ENCODE measurements at regions of chr12 and their contacts with region 1.

Region 1: DNA sequence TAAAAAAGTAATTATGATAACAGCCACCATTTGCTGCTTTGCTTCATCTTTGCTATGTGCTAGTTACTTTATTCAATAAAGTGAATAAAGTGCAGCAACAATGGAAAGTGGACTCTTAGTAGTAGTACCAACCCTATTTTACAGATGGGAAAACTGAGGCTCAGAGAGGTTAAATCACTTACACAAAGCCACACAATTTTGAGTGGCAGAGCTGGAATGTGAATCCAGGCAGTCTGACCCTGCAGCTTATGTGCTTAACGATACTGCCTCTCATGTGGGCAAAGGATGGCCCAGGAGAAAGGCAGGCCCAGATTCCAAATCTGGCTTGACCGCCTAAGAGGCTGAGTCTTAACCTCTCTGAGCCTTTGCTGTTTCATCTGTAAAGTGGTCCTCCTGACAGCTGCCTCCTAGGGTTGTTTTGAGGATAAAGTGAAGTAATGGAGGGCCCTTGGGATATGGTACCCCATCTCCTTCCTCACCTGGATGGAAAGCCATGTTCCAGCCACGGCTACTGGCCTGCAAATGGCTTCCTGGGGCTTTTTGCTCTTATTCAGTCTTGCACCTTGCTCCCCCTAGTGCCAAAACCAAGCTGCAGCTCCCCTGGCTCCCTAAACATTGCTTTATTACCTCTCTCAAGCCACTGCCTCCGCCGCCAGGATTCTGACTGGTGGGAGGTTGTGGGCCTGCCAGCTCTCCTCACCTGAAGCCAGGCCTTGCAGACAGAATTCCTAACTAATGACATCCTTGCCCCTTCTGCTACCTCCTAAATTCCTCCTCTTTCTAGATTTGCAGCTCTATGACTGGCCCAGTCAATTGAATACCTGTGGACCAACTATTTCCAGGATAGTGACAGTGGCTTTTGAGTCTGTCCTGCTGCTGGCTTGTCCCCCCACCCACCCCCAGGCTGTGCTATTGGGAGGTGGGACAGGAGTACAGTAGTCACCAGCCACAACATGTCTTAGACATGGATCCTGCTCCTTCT is 283.3 kb upstream of the PWP1 start:
- DNase-seq: peak; percentile 89
- H3K4me3 Mint-ChIP-seq: no peak overlapping the region
- H3K27ac Mint-ChIP-seq: no peak overlapping the region
- H3K4me1 Mint-ChIP-seq: peaks cover 30% of the 10 kb centered on the region
- H3K27me3 Mint-ChIP-seq: no peaks in the 10 kb centered on the region

Region 2: GRCh38 chr12:107131832-107132616 is 270.3 kb before region 1 on chr12:
- intact Hi-C with region 1: loop called (anchors 1 kb)
- DNase-seq: peak; percentile 76
- H3K4me3 Mint-ChIP-seq: no peak overlapping the region
- H3K27ac Mint-ChIP-seq: no peak overlapping the region
- H3K4me1 Mint-ChIP-seq: no peaks in the 10 kb centered on the region
- H3K27me3 Mint-ChIP-seq: peaks cover under 1% of the 10 kb centered on the region

Region 3: DNA sequence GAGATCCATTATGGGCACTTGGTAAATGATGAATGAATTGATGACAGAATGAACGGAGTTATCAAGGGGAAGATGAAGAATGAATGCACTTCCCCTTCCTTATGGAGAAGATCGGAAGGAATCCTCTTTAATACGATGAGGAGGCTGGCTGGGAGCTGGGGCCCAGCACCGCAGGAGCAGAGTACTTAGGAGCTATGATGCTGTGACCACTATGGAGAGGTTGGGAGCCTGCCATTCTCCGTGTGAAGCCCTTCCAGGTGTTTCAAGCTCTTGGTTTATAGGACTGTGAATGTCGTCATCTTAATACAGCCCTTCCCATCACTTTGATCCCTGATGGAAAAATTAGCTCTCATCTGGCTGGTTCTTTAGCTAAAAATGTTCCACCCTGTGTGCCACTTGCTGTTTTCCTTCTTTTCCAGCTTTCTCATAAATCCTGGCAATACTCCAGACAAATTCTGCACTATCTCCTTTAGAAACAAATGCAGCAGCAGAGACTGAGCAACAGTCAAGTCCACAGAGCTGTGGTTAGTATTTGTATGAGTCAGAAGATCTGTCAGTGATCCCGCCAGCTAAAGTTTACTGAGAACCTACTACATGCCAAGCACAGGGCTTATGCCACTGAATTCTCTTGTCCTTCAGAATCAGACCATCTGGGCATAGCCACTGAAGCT is 45.9 kb before region 1 on chr12:
- intact Hi-C with region 1: loop called (anchors 10 kb)
- DNase-seq: peak; percentile 70
- H3K4me3 Mint-ChIP-seq: peak overlapping the region; percentile 4
- H3K27ac Mint-ChIP-seq: no peak overlapping the region
- H3K4me1 Mint-ChIP-seq: peaks cover 65% of the 10 kb centered on the region
- H3K27me3 Mint-ChIP-seq: no peaks in the 10 kb centered on the region

Region 4: DNA sequence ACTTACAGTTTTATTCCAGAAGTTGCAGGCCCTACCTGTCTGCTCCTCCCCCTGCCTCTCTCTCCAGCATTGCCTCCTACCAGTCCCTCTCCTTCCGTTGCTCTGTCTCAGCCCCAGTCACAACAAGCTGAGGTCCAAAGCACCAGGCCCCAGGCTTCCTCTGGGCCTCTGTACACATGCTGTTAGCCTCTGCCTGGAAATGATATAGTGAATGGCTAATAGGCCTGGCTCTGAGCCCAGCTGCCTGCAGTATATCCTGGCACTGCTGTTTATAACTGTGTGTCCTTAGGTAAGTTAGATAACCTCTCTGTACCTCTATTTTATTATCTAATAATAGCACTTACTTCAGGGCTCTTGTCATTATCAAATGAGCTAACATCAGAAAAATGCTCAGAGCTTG is 168.4 kb after region 1 on chr12:
- intact Hi-C with region 1: no loop called
- DNase-seq: no peak
- H3K4me3 Mint-ChIP-seq: no peak overlapping the region
- H3K27ac Mint-ChIP-seq: no peak overlapping the region
- H3K4me1 Mint-ChIP-seq: peaks cover 11% of the 10 kb centered on the region
- H3K27me3 Mint-ChIP-seq: no peaks in the 10 kb centered on the region

Region 5: GRCh38 chr12:107607464-107608392 is 205.4 kb after region 1 on chr12:
- intact Hi-C with region 1: loop called (anchors 1 kb)
- DNase-seq: peak; percentile 93
- H3K4me3 Mint-ChIP-seq: no peak overlapping the region
- H3K27ac Mint-ChIP-seq: no peak overlapping the region
- H3K4me1 Mint-ChIP-seq: peaks cover 3% of the 10 kb centered on the region
- H3K27me3 Mint-ChIP-seq: no peaks in the 10 kb centered on the region